ENCODE measurements at regions of chr2 and their contacts with region 1.

Region 1: GRCh38 chr2:191051825-191052778 is 38.1 kb upstream of the STAT1 start:
- DNase-seq: peak in 1 of 2 experiments; percentile 44
- H3K4me3 ChIP-seq: no peak overlapping the region
- H3K4me3 Mint-ChIP-seq: no peak overlapping the region
- H3K27ac Mint-ChIP-seq: no peak overlapping the region
- H3K4me1 ChIP-seq: peaks cover 14% of the 10 kb centered on the region
- H3K4me1 Mint-ChIP-seq: no peaks in the 10 kb centered on the region
- H3K27me3 ChIP-seq: no peaks in the 10 kb centered on the region
- H3K27me3 Mint-ChIP-seq: peaks cover 6% of the 10 kb centered on the region
- CTCF ChIP-seq: peak; percentile 61

Region 2: GRCh38 chr2:191150600-191151330 is 98.7 kb after region 1 on chr2 and contains the start of gene STAT4:
- CTCF ChIA-PET with region 1: interaction called, 68 read pairs
- POLR2A ChIA-PET with region 1: interaction called, 3 read pairs
- intact Hi-C with region 1: loop called (anchors 1 kb)
- DNase-seq: peak in 1 of 2 experiments; percentile 24
- H3K4me3 ChIP-seq: peak within 1 kb of the TSS; percentile 25
- H3K4me3 Mint-ChIP-seq: peak within 1 kb of the TSS; percentile 70
- H3K27ac Mint-ChIP-seq: no peak within 1 kb of the TSS
- H3K4me1 ChIP-seq: no peaks in the 10 kb centered on the region
- H3K4me1 Mint-ChIP-seq: peaks cover 5% of the 10 kb centered on the region
- H3K27me3 ChIP-seq: no peaks in the 10 kb centered on the region
- H3K27me3 Mint-ChIP-seq: peaks cover 7% of the 10 kb centered on the region
- CTCF ChIP-seq: no peak
- total RNA-seq, gene STAT4: 0.19 and 0.48 TPM in 2 replicates